ENCODE measurements at regions of chr3 and their contacts with region 1.

Region 1: DNA sequence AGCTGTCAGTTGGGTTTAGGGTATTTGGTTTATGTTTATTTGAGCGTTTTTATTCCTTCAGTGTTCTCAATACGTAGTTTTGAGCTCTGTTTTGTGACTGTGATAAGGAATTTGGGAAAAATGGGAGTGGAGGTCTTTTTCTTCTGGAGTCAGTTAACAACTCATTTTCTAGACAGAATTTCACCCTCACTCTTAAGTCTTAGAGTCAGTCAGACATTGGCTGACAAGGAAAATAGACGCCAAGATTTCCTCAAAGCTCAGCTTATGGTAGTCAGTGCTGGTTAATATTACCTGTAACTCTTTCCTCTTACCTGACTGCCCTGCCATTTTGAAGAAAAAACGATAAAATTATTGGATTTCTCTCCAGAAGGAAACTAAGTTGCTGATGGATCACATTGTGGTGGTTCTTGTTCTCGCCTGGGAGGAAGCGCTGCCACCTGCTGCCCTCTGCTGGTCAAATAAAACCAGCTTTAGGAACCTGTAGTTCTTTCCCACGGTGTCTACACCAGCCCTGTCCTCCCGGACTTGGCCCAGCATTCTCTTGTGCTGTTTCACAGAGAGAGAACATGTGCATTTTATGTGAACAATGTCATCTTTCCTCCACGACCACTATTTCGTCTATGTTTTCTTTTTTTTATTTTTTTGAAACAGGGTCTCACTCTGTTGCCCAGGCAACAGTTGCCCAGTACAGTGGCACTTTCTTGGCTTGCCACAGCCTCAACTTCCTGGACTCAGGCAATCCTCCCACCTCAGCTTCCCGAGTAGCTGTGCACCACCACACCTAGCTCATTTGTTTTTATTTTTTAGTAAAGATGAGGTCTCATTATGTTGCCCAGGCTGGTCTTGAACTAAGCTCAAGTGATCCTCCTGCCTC is 41.4 kb upstream of the UMPS start:
- DNase-seq: peak; percentile 88
- ATAC-seq: peak; percentile 95
- H3K4me3 Mint-ChIP-seq: no peak overlapping the region
- H3K27ac Mint-ChIP-seq: no peak overlapping the region
- H3K4me1 Mint-ChIP-seq: peaks cover 25% of the 10 kb centered on the region
- H3K27me3 Mint-ChIP-seq: peaks cover 32% of the 10 kb centered on the region

Region 2: DNA sequence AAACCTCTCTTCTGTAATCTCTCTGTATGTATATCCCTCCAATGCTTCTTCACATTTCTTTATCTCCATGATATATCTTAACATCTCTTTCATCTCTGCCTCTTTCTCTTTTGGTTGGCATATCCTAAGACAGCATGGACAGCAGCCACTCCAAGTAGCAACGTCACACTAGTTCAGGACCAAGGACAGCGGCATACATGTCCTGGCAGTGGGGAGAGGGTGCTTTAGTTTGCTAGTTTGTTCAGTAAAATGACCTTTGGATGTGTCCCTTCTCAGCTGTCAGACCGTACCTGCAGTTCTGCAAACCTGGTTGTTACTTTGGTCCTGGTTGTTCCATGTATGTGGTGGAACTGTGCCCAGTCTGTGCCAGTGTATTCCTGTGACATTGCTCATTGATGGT is 471.3 kb before region 1 on chr3:
- CTCF ChIA-PET with region 1: no interaction called
- POLR2A ChIA-PET with region 1: no interaction called
- DNase-seq: peak; percentile 56
- ATAC-seq: no peak
- H3K4me3 Mint-ChIP-seq: no peak overlapping the region
- H3K27ac Mint-ChIP-seq: no peak overlapping the region
- H3K4me1 Mint-ChIP-seq: no peaks in the 10 kb centered on the region
- H3K27me3 Mint-ChIP-seq: no peaks in the 10 kb centered on the region

Region 3: DNA sequence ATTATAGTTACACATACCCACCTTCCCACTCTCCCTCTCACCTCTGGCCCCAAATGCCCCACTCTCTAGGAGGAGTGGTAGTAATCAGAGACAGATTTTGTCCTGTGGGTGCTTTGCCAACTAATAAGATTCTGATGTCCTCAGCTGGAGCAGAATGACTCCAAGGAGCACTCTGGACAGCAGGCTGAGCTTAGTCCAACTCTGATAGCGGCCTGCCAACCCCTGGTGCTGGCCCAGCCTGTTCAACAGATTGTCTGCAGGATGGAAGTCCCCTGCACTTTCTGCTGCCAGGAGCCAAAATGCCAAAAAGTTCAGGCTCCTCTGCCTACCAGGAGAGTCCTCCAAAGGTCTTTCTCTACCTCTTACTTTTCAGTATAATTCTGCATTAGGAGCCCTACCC is 119.1 kb before region 1 on chr3:
- CTCF ChIA-PET with region 1: interaction called, 56 read pairs
- POLR2A ChIA-PET with region 1: no interaction called
- DNase-seq: no peak
- ATAC-seq: no peak
- H3K4me3 Mint-ChIP-seq: no peak overlapping the region
- H3K27ac Mint-ChIP-seq: no peak overlapping the region
- H3K4me1 Mint-ChIP-seq: peaks cover 17% of the 10 kb centered on the region
- H3K27me3 Mint-ChIP-seq: peaks cover 30% of the 10 kb centered on the region

Region 4: DNA sequence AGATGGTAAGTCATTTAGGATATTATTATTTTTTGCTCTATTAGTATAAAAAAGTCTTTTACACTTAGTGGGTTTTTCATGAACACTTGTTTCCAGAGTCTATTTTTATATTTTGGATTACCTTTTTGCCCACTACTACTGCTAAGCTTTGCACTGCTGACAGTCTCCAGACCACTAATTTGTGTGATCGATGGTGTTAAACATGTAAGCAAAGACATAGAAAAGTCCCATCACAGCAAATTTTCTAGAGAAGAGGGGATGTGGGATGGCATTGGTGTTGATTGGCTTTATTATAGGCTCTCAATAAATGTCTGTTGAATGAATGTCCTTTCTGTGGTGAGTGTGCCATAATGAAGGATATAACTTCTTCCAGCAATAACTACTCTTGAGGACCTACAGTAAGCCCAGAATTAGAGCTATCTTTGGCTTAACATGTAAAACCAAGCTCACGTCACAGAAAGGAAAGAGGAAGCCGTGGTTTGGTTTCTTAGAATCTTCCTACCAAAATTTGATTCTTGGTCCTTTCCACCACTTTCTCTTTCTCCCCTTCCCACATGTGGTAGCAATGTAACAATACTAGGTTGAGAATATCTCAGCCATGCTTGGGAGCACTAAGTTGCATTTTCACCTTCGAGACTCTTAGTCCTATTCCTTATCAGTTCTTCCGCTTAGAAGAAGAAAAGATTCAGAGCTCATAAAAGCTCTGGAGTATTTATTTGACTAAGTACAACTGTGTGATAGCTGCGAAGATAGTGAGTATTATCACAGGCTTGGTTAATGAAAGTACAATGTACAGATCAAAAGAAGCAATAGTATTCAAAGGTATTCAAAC is 49.2 kb before region 1 on chr3:
- CTCF ChIA-PET with region 1: interaction called, 13 read pairs
- POLR2A ChIA-PET with region 1: no interaction called
- DNase-seq: peak; percentile 58
- ATAC-seq: peak; percentile 83
- H3K4me3 Mint-ChIP-seq: peak overlapping the region; percentile 61
- H3K27ac Mint-ChIP-seq: peak overlapping the region; percentile 84
- H3K4me1 Mint-ChIP-seq: peaks cover 79% of the 10 kb centered on the region
- H3K27me3 Mint-ChIP-seq: peaks cover 14% of the 10 kb centered on the region

Region 5: DNA sequence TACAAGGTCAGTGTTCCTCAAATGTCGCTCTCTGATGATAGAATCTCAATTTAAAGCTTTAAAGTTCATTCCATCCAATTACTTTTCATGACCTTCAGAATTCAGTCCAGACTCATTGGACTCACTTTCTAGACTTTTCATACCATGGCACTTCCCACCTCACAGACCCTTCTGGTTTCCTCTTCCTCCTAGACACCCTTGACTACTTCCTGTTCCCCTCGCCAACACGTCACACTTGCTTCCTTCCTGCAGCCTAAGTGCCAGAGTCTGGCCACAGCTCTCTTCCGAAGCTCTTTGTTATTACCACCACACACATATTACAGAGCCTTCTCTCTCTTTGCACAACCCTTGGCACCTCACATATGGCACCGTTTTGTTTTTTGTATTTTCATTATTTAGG is 17.7 kb before region 1 on chr3:
- CTCF ChIA-PET with region 1: interaction called, 14 read pairs
- POLR2A ChIA-PET with region 1: no interaction called
- DNase-seq: peak; percentile 70
- ATAC-seq: peak; percentile 88
- H3K4me3 Mint-ChIP-seq: peak overlapping the region; percentile 30
- H3K27ac Mint-ChIP-seq: peak overlapping the region; percentile 87
- H3K4me1 Mint-ChIP-seq: peaks cover 56% of the 10 kb centered on the region
- H3K27me3 Mint-ChIP-seq: no peaks in the 10 kb centered on the region